ENCODE measurements at regions of chr4 and their contacts with region 1.

Region 1: DNA sequence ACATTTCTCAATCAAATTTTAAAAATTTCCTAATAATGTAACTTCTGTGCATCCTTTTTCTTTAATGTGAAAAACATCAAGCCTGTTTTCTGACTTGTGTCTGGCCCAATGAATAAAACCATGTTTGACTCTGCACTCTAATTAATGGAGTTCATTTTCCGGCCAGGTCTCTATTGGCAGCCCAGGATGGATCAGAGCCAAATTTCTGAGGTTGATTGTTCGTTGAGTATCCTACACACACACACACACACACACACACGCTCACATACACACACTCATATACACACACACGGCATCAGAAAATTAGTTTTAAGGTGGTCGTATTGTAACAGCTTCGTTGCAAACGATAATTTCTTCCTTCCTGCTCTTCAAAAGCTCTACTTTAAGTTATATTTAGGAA is 28.9 kb upstream of the TLL1 start:
- DNase-seq: no peak
- ATAC-seq: no peak
- H3K4me3 ChIP-seq: no peak overlapping the region
- H3K27ac ChIP-seq: no peak overlapping the region
- H3K4me1 ChIP-seq: 0 out of 2 replicates have a peak, but pooled peaks cover 5% of the 10 kb centered on the region
- H3K27me3 ChIP-seq: no peaks in the 10 kb centered on the region
- CTCF ChIP-seq: no peak

Region 2: GRCh38 chr4:165787516-165788274 is 56.5 kb before region 1 on chr4:
- CTCF ChIA-PET with region 1: no interaction called
- POLR2A ChIA-PET with region 1: no interaction called
- intact Hi-C with region 1: no loop called
- DNase-seq: no peak
- ATAC-seq: no peak
- H3K4me3 ChIP-seq: no peak overlapping the region
- H3K27ac ChIP-seq: no peak overlapping the region
- H3K4me1 ChIP-seq: no peaks in the 10 kb centered on the region
- H3K27me3 ChIP-seq: no peaks in the 10 kb centered on the region
- CTCF ChIP-seq: no peak

Region 3: GRCh38 chr4:165953181-165953580 is 109.0 kb after region 1 on chr4:
- CTCF ChIA-PET with region 1: no interaction called
- POLR2A ChIA-PET with region 1: interaction called, 12 read pairs
- intact Hi-C with region 1: no loop called
- DNase-seq: no peak
- ATAC-seq: no peak
- H3K4me3 ChIP-seq: no peak overlapping the region
- H3K27ac ChIP-seq: no peak overlapping the region
- H3K4me1 ChIP-seq: no peaks in the 10 kb centered on the region
- H3K27me3 ChIP-seq: no peaks in the 10 kb centered on the region
- CTCF ChIP-seq: no peak